GM18951 (cell line): ENCODE measurements at regions of chrX and their contacts with region 1.

Region 1: GRCh38 chrX:130055103-130055502 is 55.2 kb downstream of the ELF4 start:
- POLR2A ChIP-seq: no peak

Region 2: DNA sequence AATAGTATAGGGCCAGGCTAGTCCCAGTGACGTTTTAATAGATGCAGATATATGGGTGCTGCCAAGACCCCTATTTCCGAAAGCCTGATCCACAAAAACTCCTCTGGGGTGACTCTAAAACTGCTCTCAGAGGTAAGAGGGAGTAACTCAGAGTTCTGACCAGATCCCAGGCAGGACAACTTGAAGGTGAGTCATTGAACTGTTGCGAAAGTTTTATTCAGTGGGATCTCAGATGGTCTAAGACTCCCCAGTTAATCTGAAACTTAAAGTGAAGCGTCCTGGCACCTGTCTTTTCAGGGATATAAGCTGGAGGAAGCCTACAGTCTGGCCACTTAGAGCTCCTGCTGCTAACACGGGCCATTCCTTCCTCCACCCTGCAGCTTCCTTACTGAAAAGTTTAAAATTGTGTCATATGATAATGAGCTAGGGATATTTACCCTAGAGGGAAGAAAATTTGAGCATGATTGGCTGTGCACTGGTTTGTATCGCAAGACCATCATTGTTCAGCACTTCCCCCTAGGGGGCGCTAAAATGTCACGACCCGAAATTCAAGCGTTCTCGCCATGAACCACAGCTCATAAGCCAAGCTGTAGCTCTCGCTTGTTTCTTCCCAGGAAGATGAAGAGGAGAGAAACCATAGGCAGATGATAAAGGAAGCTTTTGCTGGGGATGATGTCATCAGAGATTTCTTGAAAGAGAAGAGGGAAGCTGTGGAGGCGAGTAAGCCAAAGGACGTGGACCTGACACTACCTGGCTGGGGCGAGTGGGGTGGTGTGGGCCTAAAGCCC is 129.6 kb before region 1 on chrX:
- in situ Hi-C with region 1: loop called (anchors 10 kb)
- POLR2A ChIP-seq: no peak

Region 3: DNA sequence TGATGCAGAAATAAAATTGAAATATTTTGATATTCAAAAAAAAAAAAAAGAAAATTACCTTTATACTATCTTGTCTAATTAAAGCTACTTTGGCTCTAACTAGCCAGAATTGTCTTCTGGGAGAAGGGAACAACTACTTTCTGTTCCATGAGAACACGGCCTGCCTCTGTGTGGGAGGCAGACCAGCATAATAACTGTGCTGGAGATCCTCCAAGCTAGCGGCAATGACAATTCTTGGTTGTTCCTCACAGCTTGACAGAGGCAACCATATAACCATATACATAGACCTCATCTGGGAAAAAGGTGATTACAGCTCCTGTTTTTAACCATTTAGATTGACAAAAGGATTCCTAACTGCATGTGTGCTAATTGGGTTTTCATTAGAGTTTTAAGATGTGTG is 442.4 kb after region 1 on chrX:
- in situ Hi-C with region 1: no loop called
- POLR2A ChIP-seq: no peak